ENCODE measurements at regions of chr17 and their contacts with region 1.

Region 1: DNA sequence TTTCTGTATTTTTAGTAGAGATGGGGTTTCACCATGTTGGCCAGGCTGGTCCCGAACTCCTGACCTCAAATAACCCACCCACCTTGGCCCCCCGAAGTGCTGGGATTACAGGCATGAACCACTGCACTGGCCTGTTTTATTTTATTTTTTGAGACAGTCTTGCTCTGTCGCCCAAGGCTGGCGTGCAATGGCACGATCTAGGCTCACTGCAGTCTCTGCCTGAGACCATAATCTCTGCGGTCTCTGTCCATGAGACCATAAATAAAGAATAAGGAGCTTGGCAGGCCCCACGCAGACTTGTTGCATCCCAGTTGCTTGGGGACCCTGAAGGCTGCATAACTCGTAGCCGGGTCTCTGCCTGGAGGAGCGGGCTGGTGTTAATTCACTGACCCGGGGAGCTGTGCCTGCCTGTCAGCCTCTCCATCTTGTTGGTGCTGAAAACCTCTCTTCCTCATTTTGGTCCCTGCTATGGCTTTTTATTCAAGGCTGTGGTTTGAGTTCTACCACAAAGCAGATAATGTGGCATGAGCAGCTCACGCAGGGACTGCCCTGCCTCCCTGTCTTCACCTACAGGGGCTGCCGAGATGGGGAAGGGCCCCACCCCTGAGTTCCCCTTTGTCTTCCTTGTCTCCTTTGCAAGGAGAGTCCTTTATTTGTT is 82.1 kb downstream of the MSI2 start:
- DNase-seq: peak; percentile 28
- ATAC-seq: peak; percentile 95
- H3K4me3 Mint-ChIP-seq: peak overlapping the region; percentile 58
- H3K27ac Mint-ChIP-seq: peak overlapping the region; percentile 36
- H3K4me1 Mint-ChIP-seq: peaks cover 26% of the 10 kb centered on the region
- H3K27me3 Mint-ChIP-seq: no peaks in the 10 kb centered on the region
- CTCF ChIP-seq: no peak

Region 2: GRCh38 chr17:57284984-57285646 is 53.3 kb before region 1 on chr17:
- CTCF ChIA-PET with region 1: no interaction called
- POLR2A ChIA-PET with region 1: no interaction called
- intact Hi-C with region 1: loop called (anchors 5 kb)
- DNase-seq: peak; percentile 38
- ATAC-seq: peak; percentile 89
- H3K4me3 Mint-ChIP-seq: peak overlapping the region; percentile 79
- H3K27ac Mint-ChIP-seq: peak overlapping the region; percentile 74
- H3K4me1 Mint-ChIP-seq: peaks cover 43% of the 10 kb centered on the region
- H3K27me3 Mint-ChIP-seq: no peaks in the 10 kb centered on the region
- CTCF ChIP-seq: no peak

Measured in activated B cell treated with CpG ODN at 0.5 μM for 24 hours (primary cell).